ENCODE measurements at regions of chr22 and their contacts with region 1.

Region 1: DNA sequence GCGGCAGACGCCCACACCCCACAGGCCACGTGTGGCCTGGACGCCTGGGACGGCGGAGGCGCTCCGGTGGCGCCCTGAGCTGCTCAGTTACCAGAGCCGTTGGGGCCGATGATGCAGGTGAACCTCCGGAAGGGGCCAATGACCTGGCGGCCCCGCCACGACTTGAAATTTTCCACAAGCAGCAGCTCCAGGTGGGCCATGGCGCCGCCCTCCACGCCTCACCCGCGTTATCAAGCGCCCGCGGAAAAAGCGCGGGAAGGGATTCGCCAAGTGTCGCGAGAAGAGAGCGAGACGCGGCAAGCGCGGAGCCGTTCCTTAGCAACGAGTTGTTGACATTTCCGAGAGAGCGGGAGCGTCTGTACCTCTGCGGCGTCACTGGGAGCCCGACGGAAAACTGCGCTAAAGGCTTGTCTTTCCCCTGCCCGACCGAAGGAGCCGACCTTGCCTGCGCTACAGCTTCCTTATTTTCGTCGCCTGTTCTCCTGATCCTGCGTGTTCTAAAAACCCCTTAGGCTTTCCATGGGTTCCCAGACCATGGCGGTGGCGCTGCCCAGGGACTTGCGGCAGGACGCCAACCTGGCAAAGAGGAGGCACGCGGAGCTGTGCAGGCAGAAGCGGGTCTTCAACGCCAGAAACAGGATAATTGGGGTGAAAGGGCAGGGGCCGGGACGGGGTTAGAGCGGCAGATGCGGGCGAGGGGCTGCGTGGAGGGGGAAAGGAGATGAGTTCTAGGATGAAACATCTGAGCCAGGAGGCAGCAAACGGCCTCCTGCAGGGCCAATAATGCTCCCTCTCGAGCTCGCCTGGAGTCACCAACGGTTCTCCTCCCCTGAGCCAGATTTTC is at the starts of genes RIBC2 and SMC1B:
- DNase-seq: peak; percentile 76
- H3K4me3 ChIP-seq: peak within 1 kb of the TSS; percentile 32 to 66 (median 49)
- H3K27ac ChIP-seq: peak within 1 kb of the TSS; percentile 56
- H3K4me1 ChIP-seq: peaks cover 2% of the 10 kb centered on the region
- H3K27me3 ChIP-seq: peaks cover 0 to 3% of the 10 kb centered on the region in 2 experiments
- CTCF ChIP-seq: peak in 1 of 2 donors; percentile 1
- POLR2A ChIP-seq: no peak
- total RNA-seq, gene RIBC2: 5.7 TPM in 2 replicates
- total RNA-seq, gene SMC1B: 0.07 TPM in 1 of 2 replicates, not detected in the other

Region 2: DNA sequence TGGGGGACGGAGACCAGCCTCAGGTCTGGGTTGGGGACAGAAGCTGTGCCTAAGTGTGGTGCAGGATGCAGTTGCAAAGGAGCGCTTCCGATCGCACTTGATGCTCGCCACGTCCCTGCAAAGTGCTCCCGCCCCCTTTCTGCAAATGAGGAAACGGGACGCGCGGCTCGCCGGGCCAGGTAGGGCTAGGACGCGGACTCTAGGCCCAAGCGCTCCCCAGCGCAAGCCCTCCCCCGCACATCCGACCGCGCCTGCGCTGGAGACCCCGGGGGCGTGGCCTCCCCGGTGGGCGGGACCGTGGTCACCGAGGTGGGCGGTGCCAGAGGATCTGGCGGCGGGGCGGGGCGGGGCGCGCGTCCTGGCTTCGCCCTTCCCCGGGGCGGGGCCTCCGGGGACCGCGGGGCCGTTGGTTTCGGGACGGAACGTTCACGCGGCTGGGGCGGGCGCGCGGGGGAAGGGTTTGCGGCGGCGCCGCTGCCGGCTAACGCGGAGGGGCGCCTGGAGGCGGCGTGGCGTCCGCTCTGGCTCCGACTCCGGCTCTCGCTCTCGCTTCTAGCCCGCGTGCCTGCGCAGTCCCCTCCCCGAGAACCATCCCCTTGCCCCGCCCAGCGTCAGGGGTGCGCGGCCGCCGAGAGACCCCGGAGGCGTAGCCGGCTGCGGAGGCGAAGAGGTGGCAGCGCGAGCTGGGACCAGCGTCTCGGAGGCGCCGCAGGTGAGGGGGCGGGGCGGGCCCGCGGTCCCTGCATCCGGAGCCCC is 103.9 kb before region 1 on chr22 and contains the start of gene FAM118A:
- CTCF ChIA-PET with region 1: interaction called, 3 read pairs
- POLR2A ChIA-PET with region 1: no interaction called
- dilution Hi-C with region 1: no loop called
- intact Hi-C with region 1: loop called (anchors 1 kb)
- DNase-seq: peak; percentile 91
- H3K4me3 ChIP-seq: peak within 1 kb of the TSS; percentile 74 to 98 (median 97)
- H3K27ac ChIP-seq: peak within 1 kb of the TSS; percentile 66
- H3K4me1 ChIP-seq: peaks cover 24% of the 10 kb centered on the region
- H3K27me3 ChIP-seq: no peaks in the 10 kb centered on the region
- CTCF ChIP-seq: peak in 1 of 2 donors; percentile 17
- POLR2A ChIP-seq: peak; percentile 64
- total RNA-seq, gene FAM118A: 20.2 and 44.2 TPM in 2 replicates

Region 3: DNA sequence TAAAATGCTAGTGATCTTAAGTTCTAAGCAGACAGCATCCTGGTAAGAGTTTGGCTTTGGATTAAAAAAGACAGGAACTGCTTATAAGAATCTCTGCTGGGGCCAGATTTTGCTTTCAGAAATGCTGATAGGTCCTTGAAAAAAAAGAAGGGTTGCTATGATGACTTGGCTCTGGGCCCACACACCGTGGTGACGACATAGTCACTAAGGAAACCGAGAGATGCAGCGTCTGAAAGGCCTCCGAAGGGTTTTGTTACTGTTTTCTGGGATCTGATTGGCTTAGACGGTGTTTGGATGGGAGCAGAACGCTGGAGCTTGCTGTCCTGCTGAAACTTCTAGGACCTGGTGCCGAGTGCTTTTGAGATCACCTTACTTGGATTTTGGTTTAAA is 95.4 kb before region 1 on chr22:
- CTCF ChIA-PET with region 1: interaction called, 9 read pairs
- POLR2A ChIA-PET with region 1: no interaction called
- dilution Hi-C with region 1: no loop called
- intact Hi-C with region 1: loop called (anchors 1 kb)
- DNase-seq: peak; percentile 97
- H3K4me3 ChIP-seq: peak overlapping the region in 1 of 3 experiments; percentile 44
- H3K27ac ChIP-seq: peak overlapping the region; percentile 99
- H3K4me1 ChIP-seq: peaks cover 33% of the 10 kb centered on the region
- H3K27me3 ChIP-seq: no peaks in the 10 kb centered on the region
- CTCF ChIP-seq: no peak
- POLR2A ChIP-seq: no peak

Region 4: GRCh38 chr22:46661221-46661851 is 1247.7 kb after region 1 on chr22:
- CTCF ChIA-PET with region 1: no interaction called
- POLR2A ChIA-PET with region 1: no interaction called
- dilution Hi-C with region 1: no loop called
- intact Hi-C with region 1: no loop called
- DNase-seq: no peak
- H3K4me3 ChIP-seq: no peak overlapping the region
- H3K27ac ChIP-seq: no peak overlapping the region
- H3K4me1 ChIP-seq: no peaks in the 10 kb centered on the region
- H3K27me3 ChIP-seq: no peaks in the 10 kb centered on the region
- CTCF ChIP-seq: no peak
- POLR2A ChIP-seq: no peak

Measured in endothelial cell of umbilical vein (primary cell).